HEK293T (cell line): ENCODE measurements at regions of chr1 and their contacts with region 1.

Region 1: GRCh38 chr1:219159946-219160645 is 13.6 kb upstream of the LYPLAL1 start:
- DNase-seq: no peak

Region 2: GRCh38 chr1:219144658-219145315 is 15.3 kb before region 1 on chr1:
- CTCF ChIA-PET with region 1: no interaction called
- POLR2A ChIA-PET with region 1: no interaction called
- DNase-seq: no peak

Region 3: GRCh38 chr1:219173758-219174588 is 13.9 kb after region 1 on chr1 and contains the start of gene LYPLAL1:
- CTCF ChIA-PET with region 1: no interaction called
- POLR2A ChIA-PET with region 1: interaction called, 14 read pairs
- DNase-seq: peak; percentile 93

Region 4: DNA sequence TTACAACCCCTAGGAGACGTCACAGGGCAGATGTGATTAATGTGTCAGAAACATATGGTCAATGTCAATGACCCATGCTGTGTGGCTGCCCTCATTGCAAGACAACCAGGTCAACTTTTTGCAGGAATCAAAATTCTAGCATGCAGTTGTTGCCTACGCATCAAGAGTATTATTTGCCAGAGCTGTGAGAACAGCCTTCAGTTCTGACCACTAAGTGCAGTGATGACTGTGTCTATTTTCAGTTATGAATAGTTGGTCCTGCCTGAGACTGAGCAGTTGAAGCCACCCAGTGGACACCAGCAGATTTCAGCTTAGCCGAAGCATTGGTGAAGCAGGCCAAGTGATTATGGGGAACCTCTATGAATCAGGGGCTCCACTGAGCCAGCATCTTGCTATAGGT is 60.8 kb after region 1 on chr1:
- CTCF ChIA-PET with region 1: no interaction called
- POLR2A ChIA-PET with region 1: no interaction called
- DNase-seq: no peak

Region 5: GRCh38 chr1:219271818-219272535 is 111.9 kb after region 1 on chr1:
- CTCF ChIA-PET with region 1: no interaction called
- POLR2A ChIA-PET with region 1: no interaction called
- DNase-seq: no peak